Right cardiac atrium (tissue), 5 donors: ENCODE measurements at regions of chr10 and their contacts with region 1.

Region 1: DNA sequence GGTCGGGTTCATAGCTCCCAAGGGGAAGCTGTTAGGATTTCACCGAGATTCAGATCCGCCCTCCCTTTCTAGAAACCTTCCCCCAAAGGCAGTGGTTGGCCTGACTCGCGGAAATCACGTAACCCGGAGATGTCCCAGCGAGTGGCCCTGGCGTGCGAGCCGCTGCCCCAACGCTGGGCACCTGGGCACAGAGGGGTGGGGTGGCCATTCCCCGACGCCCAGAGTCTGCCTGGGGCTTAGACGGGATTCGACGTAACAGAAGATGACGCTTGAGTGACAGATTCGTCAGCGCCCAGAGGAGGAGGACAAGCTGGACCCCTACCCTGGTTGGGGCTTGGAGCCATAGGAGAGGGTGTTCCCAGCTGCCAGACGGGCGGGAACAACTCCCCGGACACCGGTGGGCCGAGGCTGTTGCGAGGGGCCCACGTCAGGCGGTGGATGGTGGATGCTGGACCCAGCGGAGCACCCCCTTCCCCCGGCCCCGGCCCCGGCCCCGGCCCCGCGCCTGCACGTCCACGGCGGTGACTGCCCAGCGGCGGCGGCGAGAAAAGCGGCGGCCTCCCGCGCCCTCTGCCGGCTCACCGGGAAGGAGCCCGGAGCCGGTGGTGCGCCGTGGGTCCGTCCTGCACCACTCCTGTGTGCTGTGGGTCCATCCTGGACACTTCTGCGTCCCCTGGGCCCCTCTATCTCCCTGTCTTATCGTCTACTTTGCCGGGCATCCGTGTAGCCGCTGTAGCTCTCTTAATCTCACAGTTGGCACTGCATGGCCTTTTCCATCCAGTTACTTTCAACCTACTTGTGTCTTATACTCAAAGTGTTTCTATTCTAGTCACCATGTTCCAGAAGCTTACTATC is 35.4 kb upstream of the KNDC1 start:
- DNase-seq: peak; percentile 24 to 77 (median 65)
- ATAC-seq: peak; percentile 56 to 64
- H3K4me3 ChIP-seq: no peak overlapping the region
- H3K27ac ChIP-seq: no peak overlapping the region
- H3K4me1 ChIP-seq: no peaks in the 10 kb centered on the region
- H3K27me3 ChIP-seq: no peaks in the 10 kb centered on the region

Region 2: GRCh38 chr10:132654702-132655661 is 469.6 kb before region 1 on chr10:
- intact Hi-C with region 1: loop called in 1 of 4 experiments (anchors 10 kb)
- DNase-seq: peak; percentile 57 to 83 (median 80)
- ATAC-seq: peak; percentile 11 to 36
- H3K4me3 ChIP-seq: no peak overlapping the region
- H3K27ac ChIP-seq: no peak overlapping the region
- H3K4me1 ChIP-seq: no peaks in the 10 kb centered on the region
- H3K27me3 ChIP-seq: no peaks in the 10 kb centered on the region

Region 3: DNA sequence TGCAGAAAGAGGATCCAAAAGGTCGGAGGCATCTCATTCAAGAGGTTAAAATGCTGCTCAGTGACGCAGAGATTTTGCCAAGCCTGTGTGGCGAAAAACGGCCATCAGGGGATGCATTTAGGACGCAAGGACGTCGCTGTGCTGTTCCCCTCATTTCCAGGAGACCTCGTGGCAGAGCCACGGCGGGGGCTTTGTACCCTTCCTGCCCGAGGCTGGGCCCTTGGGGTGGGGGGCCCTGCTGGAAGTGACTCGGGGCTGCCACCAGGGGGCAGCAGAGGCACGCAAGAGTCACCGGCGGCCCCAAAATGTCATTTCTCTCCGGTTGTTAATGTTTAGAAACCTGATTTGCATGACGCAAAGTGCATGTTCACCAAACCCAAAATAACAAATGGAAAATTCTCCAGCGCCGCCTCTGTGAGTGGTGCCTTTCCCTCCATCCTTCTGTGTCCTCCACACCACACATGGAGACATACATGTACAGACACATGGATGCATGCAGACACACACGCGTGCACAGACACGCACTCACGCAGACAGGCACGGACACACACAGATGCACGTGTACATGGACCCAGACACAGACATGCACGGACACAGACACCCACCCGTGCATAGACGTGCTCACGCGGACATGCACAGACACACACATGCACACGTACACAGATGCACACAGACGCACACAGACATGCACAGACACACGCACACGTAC is 287.6 kb before region 1 on chr10:
- intact Hi-C with region 1: loop called in 2 of 4 experiments (anchors 5 kb)
- DNase-seq: no peak
- ATAC-seq: peak; percentile 47 to 56
- H3K4me3 ChIP-seq: no peak overlapping the region
- H3K27ac ChIP-seq: no peak overlapping the region
- H3K4me1 ChIP-seq: no peaks in the 10 kb centered on the region
- H3K27me3 ChIP-seq: no peaks in the 10 kb centered on the region

Region 4: DNA sequence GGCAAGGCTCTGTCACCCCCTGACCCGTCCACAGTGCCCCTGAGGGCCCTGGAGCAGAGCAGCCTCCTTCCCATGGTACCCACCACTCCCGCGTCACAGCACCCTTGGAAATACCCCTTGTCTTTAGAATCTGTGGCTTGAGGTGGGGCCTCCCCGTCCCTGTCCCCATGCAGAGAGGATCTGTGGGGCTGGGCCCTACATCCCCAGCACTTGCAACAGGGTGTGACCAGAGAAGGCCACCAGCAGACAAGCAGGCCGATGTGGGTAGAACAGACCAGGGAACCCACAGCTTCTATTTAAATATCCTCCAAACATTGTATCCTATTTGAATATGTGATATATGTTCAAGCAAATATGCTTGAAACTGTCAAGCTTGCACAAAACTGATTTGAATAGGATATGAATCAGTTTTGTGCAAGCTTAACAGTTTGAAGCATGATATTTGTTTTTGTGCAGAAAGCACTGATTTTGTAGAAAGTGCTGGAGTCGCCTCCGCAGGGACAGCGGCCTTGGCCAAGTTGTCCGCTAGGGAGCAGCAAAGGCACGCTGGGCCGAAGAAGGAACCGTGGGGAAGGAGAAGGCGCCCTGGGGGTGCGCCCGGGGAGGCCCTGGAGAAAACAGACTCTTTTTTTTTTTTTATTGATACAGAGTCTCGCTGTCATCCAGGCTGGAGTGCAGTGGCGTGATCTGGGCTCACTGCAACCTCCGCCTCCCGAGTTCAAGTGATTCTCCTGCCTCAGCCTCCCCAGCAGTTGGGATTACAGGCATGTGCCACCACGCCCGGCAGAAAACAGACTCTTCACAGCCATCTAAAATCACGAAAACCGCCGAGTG is 184.4 kb before region 1 on chr10:
- intact Hi-C with region 1: loop called in 2 of 4 experiments (anchors 5 kb)
- DNase-seq: peak in 1 of 3 donors; percentile 76
- ATAC-seq: peak in 1 of 2 donors; percentile 39
- H3K4me3 ChIP-seq: no peak overlapping the region
- H3K27ac ChIP-seq: no peak overlapping the region
- H3K4me1 ChIP-seq: no peaks in the 10 kb centered on the region
- H3K27me3 ChIP-seq: no peaks in the 10 kb centered on the region

Region 5: GRCh38 chr10:133044401-133044804 is 80.2 kb before region 1 on chr10:
- intact Hi-C with region 1: no loop called
- DNase-seq: peak; percentile 65 to 87 (median 78)
- ATAC-seq: peak; percentile 80 to 87
- H3K4me3 ChIP-seq: no peak overlapping the region
- H3K27ac ChIP-seq: no peak overlapping the region
- H3K4me1 ChIP-seq: no peaks in the 10 kb centered on the region
- H3K27me3 ChIP-seq: no peaks in the 10 kb centered on the region

Region 6: DNA sequence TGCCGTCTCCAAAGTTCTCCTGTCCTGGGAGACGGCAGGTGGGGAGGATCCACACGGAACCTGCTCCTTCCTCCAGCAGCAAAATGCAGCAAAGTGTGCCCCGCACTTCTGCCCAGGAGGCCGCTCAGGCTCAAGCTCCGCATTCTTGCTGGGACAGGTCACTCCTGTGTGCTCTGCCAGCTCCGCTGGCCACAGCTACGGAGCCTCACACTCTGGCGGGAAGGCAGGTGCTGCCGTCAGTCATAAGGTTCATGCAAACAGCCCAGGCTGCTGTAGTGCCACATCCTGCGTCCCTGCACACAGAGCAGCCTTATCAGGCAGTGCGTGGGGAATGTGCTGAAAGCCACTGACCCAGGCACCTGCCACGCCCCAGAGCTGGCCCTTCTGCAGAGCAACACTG is 14.5 kb before region 1 on chr10:
- intact Hi-C with region 1: no loop called
- DNase-seq: peak in 1 of 3 donors; percentile 43
- ATAC-seq: peak; percentile 43 to 57
- H3K4me3 ChIP-seq: no peak overlapping the region
- H3K27ac ChIP-seq: no peak overlapping the region
- H3K4me1 ChIP-seq: no peaks in the 10 kb centered on the region
- H3K27me3 ChIP-seq: no peaks in the 10 kb centered on the region